HepG2 (cell line): ENCODE measurements at regions of chr1 and their contacts with region 1.

Region 1: DNA sequence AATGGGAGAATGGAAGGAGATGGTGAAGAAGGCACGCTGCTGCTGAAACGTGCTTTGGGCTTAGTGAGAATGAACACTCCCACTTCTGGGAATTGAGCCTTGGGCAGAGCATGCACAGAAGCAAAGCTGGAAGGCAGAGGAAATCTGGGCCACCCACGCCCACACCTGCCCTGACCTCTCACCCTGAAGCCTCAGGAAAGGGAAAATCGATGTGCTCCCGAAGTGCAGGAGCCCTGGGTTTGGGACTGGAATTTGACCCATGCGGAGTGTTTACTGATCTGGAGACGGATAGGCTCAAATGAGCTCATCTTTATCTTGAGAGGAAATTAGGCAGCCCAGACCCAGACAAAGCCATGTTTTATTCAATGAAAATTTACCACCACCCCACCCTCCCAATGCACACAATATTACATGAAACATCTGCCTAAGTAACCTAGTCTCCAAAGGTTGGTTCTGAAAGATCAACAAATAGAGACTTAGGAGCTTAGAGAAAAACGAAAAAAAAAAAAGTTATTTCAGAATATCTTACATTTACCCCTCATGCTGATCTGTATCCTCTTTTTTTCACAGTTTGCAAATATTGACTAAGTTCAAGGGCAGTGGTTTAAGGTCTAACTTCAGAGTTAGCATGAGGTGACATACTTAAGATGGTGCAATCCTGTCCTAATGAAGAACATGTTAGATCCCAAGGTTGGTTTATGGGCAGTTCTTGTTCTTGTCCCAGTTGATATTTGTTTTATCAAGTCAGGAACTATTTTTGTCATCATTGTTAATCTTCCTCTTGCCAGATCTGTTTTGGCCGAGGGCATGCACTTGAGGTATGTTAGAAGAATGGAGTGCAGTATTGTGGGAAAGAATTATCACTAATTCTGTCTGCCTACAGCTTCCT is 63.0 kb downstream of the PROX1 start:
- DNase-seq: peak; percentile 99
- ATAC-seq: peak; percentile 91
- H3K4me3 ChIP-seq: peak overlapping the region in 2 of 3 experiments; percentile 4 to 32; a peak in 3 of 6 replicates
- H3K27ac ChIP-seq: peak overlapping the region; percentile 91
- H3K4me1 ChIP-seq: peaks cover 73% of the 10 kb centered on the region
- H3K27me3 ChIP-seq: no peaks in the 10 kb centered on the region
- CTCF ChIP-seq: no peak
- EP300 ChIP-seq: peak; percentile 66 to 96
- POLR2A ChIP-seq: peak in 1 of 2 experiments; percentile 44; a peak in 2 of 4 replicates
- RAD21 ChIP-seq: no peak; the same call in none of the 2 replicates

Region 2: GRCh38 chr1:214002472-214002871 is 48.3 kb before region 1 on chr1:
- CTCF ChIA-PET with region 1: no interaction called
- POLR2A ChIA-PET with region 1: interaction called, 25 read pairs
- in situ Hi-C with region 1: no loop called
- intact Hi-C with region 1: no loop called
- DNase-seq: peak; percentile 78
- ATAC-seq: peak; percentile 72
- H3K4me3 ChIP-seq: no peak overlapping the region
- H3K27ac ChIP-seq: peak overlapping the region; percentile 50
- H3K4me1 ChIP-seq: peaks cover 83% of the 10 kb centered on the region
- H3K27me3 ChIP-seq: no peaks in the 10 kb centered on the region
- CTCF ChIP-seq: no peak
- EP300 ChIP-seq: peak in 1 of 2 experiments; percentile 78; a peak in 2 of 4 replicates
- POLR2A ChIP-seq: no peak
- RAD21 ChIP-seq: no peak

Region 3: GRCh38 chr1:214037468-214037867 is 13.3 kb before region 1 on chr1:
- CTCF ChIA-PET with region 1: no interaction called
- POLR2A ChIA-PET with region 1: interaction called, 150 read pairs
- in situ Hi-C with region 1: no loop called
- intact Hi-C with region 1: no loop called
- DNase-seq: no peak
- ATAC-seq: peak; percentile 42
- H3K4me3 ChIP-seq: no peak overlapping the region
- H3K27ac ChIP-seq: no peak overlapping the region
- H3K4me1 ChIP-seq: peaks cover 77% of the 10 kb centered on the region
- H3K27me3 ChIP-seq: no peaks in the 10 kb centered on the region; a peak in 1 of 5 replicates
- CTCF ChIP-seq: no peak
- EP300 ChIP-seq: no peak
- POLR2A ChIP-seq: peak in 1 of 2 experiments; percentile 12; a peak in 1 of 4 replicates
- RAD21 ChIP-seq: no peak

Region 4: GRCh38 chr1:214086945-214087344 is 36.2 kb after region 1 on chr1:
- CTCF ChIA-PET with region 1: no interaction called
- POLR2A ChIA-PET with region 1: no interaction called
- in situ Hi-C with region 1: no loop called
- intact Hi-C with region 1: loop called (anchors 1 kb)
- DNase-seq: no peak
- ATAC-seq: no peak
- H3K4me3 ChIP-seq: no peak overlapping the region
- H3K27ac ChIP-seq: no peak overlapping the region
- H3K4me1 ChIP-seq: peaks cover 9% of the 10 kb centered on the region
- H3K27me3 ChIP-seq: no peaks in the 10 kb centered on the region
- CTCF ChIP-seq: no peak
- EP300 ChIP-seq: no peak
- POLR2A ChIP-seq: no peak
- RAD21 ChIP-seq: no peak